Activated naive CD4-positive, alpha-beta T cell treated with anti-CD3 and anti-CD28 coated beads for 36 hours (primary cell): ENCODE measurements at regions of chr14 and their contacts with region 1.

Region 1: GRCh38 chr14:106308839-106309389 is 782.5 kb downstream of the TMEM121 start:
- DNase-seq: peak; percentile 97
- H3K4me3 Mint-ChIP-seq: no peak overlapping the region
- H3K27ac Mint-ChIP-seq: no peak overlapping the region
- H3K4me1 Mint-ChIP-seq: no peaks in the 10 kb centered on the region
- H3K27me3 Mint-ChIP-seq: no peaks in the 10 kb centered on the region

Region 2: DNA sequence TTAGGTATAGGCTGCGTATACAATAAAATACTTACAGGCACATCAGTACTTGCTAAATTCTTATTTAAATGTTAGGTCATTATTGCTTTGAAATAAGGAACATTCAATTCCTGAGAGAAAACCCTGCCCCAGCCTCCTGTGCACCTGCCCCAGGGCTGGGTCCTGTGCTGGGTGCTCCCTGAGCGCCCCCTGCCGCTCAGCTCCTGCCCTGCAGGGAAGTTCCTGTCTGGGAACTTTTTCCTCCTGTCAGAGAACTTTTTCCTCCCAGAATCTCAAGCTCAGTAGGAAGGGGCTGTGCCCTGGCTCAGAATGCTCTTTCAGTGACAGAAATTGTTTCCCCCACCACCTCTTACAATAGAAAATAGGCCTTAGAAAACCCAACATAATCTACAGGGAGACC is 31.4 kb before region 1 on chr14:
- CTCF ChIA-PET with region 1: interaction called, 14 read pairs
- intact Hi-C with region 1: no loop called
- DNase-seq: peak; percentile 50
- H3K4me3 Mint-ChIP-seq: no peak overlapping the region
- H3K27ac Mint-ChIP-seq: no peak overlapping the region
- H3K4me1 Mint-ChIP-seq: peaks cover 17% of the 10 kb centered on the region
- H3K27me3 Mint-ChIP-seq: peaks cover 25% of the 10 kb centered on the region

Region 3: GRCh38 chr14:106286697-106287290 is 22.1 kb before region 1 on chr14:
- CTCF ChIA-PET with region 1: interaction called, 14 read pairs
- intact Hi-C with region 1: loop called (anchors 1 kb)
- DNase-seq: peak; percentile 32
- H3K4me3 Mint-ChIP-seq: no peak overlapping the region
- H3K27ac Mint-ChIP-seq: no peak overlapping the region
- H3K4me1 Mint-ChIP-seq: no peaks in the 10 kb centered on the region
- H3K27me3 Mint-ChIP-seq: peaks cover 9% of the 10 kb centered on the region

Region 4: GRCh38 chr14:106294324-106294723 is 14.6 kb before region 1 on chr14:
- CTCF ChIA-PET with region 1: interaction called, 15 read pairs
- intact Hi-C with region 1: no loop called
- DNase-seq: no peak
- H3K4me3 Mint-ChIP-seq: no peak overlapping the region
- H3K27ac Mint-ChIP-seq: no peak overlapping the region
- H3K4me1 Mint-ChIP-seq: no peaks in the 10 kb centered on the region
- H3K27me3 Mint-ChIP-seq: peaks cover 9% of the 10 kb centered on the region

Region 5: DNA sequence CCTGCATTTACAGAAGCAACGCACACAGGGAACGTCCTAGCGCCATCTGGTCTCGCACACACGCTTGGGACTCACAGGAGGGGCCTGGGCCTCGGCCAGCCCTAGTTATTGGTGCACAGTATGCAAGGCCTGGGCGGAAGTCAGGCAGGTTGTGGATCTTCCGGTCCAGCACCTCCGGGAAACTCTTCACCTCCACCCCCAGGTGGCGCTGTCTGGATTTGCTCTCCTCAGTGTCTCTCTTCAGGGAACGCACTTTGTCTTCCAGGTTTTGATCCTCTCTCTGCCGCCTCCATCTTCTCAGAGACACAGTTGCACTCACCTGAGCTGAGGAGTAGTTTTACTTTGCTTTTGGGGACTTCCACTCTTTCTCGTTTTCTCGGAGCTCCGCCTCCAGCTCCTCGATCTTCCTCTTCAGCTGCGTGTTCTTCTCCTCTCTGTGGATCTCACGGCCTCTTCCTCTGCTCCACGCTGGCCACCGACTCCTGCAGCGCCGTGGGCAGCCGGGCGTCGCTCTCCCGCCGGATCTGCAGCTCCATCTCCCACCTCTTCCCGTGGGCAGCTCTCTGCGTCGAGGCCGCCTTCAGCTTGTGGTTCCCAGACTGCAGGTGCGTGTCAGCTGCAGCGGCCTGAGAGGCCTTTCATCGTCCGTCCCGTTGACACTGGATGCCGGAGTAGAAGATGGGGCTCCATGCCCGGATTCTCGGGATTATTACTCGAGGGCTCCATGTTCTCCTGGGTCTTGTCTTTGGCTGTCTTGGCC is 151.2 kb after region 1 on chr14:
- CTCF ChIA-PET with region 1: no interaction called
- intact Hi-C with region 1: no loop called
- DNase-seq: peak; percentile 75
- H3K4me3 Mint-ChIP-seq: no peak overlapping the region
- H3K27ac Mint-ChIP-seq: no peak overlapping the region
- H3K4me1 Mint-ChIP-seq: no peaks in the 10 kb centered on the region
- H3K27me3 Mint-ChIP-seq: no peaks in the 10 kb centered on the region

Region 6: GRCh38 chr14:106879241-106879640 is 570.3 kb after region 1 on chr14:
- CTCF ChIA-PET with region 1: no interaction called
- intact Hi-C with region 1: no loop called
- DNase-seq: peak; percentile 78
- H3K4me3 Mint-ChIP-seq: no peak overlapping the region
- H3K27ac Mint-ChIP-seq: no peak overlapping the region
- H3K4me1 Mint-ChIP-seq: no peaks in the 10 kb centered on the region
- H3K27me3 Mint-ChIP-seq: peaks cover 28% of the 10 kb centered on the region